ENCODE measurements at regions of chr7 and their contacts with region 1.

Region 1: GRCh38 chr7:111098011-111098925 is 7.3 kb downstream of the LRRN3 start:
- DNase-seq: peak in 4 of 5 donors; percentile 11 to 31 (median 23)
- ATAC-seq: peak in 2 of 4 donors; percentile 61 to 73
- H3K4me3 ChIP-seq: no peak overlapping the region
- H3K27ac ChIP-seq: no peak overlapping the region
- H3K4me1 ChIP-seq: peaks cover 0 to 8% (median 0%) of the 10 kb centered on the region in 12 donors
- H3K27me3 ChIP-seq: no peaks in the 10 kb centered on the region
- CTCF ChIP-seq: peak; percentile 42 to 79 (median 64)
- POLR2A ChIP-seq: no peak

Region 2: DNA sequence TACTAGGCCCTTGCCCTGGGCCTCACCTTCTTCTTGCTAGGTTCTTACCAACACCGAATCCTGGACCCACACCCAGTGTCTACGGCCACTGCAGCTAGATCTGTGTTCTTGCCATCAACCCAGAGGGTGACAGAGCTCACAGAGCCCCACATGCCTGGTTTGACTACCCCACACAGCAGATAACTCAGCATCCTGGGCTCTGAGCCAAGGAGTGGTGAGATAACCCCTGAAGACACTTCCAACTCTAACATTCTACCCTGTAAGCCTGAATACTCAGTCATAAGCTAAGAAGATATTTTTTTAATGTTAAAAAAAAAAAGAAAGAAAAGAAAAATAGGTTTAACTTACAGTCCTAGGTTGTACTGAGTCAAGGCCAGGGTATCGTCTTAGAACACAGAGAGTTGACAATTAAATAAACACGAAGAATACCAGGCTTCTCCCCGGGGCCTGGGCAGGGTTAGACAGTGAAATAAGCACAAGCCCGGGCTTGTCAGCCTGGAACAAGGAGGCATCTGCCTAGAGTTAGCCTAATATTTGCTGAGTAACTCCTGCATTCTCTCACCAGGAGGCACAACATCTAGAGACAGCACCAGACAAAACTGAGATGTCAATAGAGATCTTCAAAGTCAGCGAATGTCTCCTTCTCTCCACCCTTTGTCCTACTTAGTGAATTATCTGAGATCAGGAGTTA is 563.9 kb before region 1 on chr7:
- intact Hi-C with region 1: loop called in 1 of 10 experiments (anchors 10 kb)
- DNase-seq: peak in 2 of 5 donors; percentile 28 to 60
- ATAC-seq: peak; percentile 43 to 64 (median 48)
- H3K4me3 ChIP-seq: no peak overlapping the region
- H3K27ac ChIP-seq: no peak overlapping the region
- H3K4me1 ChIP-seq: peaks cover 0 to 11% (median 2%) of the 10 kb centered on the region in 12 donors
- H3K27me3 ChIP-seq: no peaks in the 10 kb centered on the region
- CTCF ChIP-seq: no peak
- POLR2A ChIP-seq: no peak

Region 3: GRCh38 chr7:110595690-110596325 is 502.5 kb before region 1 on chr7:
- intact Hi-C with region 1: loop called in 4 of 10 experiments (anchors 10 kb)
- DNase-seq: no peak
- ATAC-seq: peak in 1 of 4 donors; percentile 42
- H3K4me3 ChIP-seq: no peak overlapping the region
- H3K27ac ChIP-seq: no peak overlapping the region
- H3K4me1 ChIP-seq: no peaks in the 10 kb centered on the region
- H3K27me3 ChIP-seq: no peaks in the 10 kb centered on the region
- CTCF ChIP-seq: peak in 2 of 12 donors; percentile 12 to 14
- POLR2A ChIP-seq: no peak

Region 4: GRCh38 chr7:111043533-111043932 is 54.7 kb before region 1 on chr7:
- intact Hi-C with region 1: no loop called
- DNase-seq: no peak
- ATAC-seq: no peak
- H3K4me3 ChIP-seq: no peak overlapping the region
- H3K27ac ChIP-seq: no peak overlapping the region
- H3K4me1 ChIP-seq: peaks cover 0 to 4% (median 0%) of the 10 kb centered on the region in 12 donors
- H3K27me3 ChIP-seq: no peaks in the 10 kb centered on the region
- CTCF ChIP-seq: no peak
- POLR2A ChIP-seq: no peak

Measured in heart left ventricle (tissue), 16 donors.